ENCODE measurements at regions of chr21 and their contacts with region 1.

Region 1: GRCh38 chr21:42818328-42818749 is 61.0 kb downstream of the WDR4 start:
- DNase-seq: peak; percentile 48 to 84 (median 69)
- ATAC-seq: peak; percentile 93
- H3K4me3 ChIP-seq: no peak overlapping the region
- H3K4me3 Mint-ChIP-seq: no peak overlapping the region
- H3K27ac ChIP-seq: no peak overlapping the region
- H3K27ac Mint-ChIP-seq: no peak overlapping the region
- H3K4me1 ChIP-seq: no peaks in the 10 kb centered on the region
- H3K4me1 Mint-ChIP-seq: peaks cover 5% of the 10 kb centered on the region
- H3K27me3 ChIP-seq: peaks cover 0 to 5% of the 10 kb centered on the region in 2 experiments
- H3K27me3 Mint-ChIP-seq: peaks cover 9% of the 10 kb centered on the region
- CTCF ChIP-seq: peak; percentile 96

Region 2: DNA sequence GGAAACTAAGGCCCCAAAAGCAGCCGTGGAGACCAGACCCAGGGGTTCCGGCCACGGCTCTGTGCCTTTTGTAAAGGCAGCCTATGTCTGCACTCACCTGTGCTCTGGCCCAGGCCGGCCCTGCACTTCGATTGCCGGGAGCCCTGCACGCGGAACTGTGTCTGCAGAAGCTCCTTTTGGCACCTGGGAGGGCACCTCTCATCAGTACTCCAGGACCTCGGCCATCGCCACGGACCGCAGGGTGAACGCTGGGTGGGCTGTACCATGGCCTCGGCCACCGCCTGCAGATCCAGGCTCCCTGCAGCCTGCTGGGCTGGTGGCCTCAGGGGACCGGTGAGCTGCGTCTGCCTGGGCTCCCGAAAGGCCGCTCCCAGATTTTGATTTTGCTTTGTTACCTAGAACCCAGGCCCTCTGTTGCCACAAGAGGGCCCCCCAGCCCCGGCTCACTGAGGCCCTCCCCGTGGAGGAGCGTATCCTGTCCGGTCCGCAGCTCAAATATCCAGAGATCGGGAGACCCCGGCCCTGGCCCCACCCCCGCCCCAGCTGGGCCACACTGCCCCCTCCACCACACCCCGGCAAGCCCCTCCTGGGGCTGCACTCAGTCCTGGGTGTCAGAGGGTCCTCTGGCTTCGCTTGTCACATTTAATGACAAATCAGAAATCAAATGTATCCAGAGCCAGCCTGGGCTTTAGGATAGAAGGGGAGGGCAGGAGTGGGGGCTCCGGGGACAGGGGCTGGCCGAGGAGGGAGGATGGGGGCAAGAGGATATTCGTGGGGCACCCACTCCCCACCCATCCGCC is 225.1 kb before region 1 on chr21:
- CTCF ChIA-PET with region 1: interaction called, 9 read pairs
- POLR2A ChIA-PET with region 1: interaction called, 3 read pairs
- intact Hi-C with region 1: loop called (anchors 1 to 5 kb)
- DNase-seq: peak; percentile 45 to 80 (median 68)
- ATAC-seq: peak; percentile 89
- H3K4me3 ChIP-seq: no peak overlapping the region
- H3K4me3 Mint-ChIP-seq: no peak overlapping the region
- H3K27ac ChIP-seq: no peak overlapping the region
- H3K27ac Mint-ChIP-seq: no peak overlapping the region
- H3K4me1 ChIP-seq: peaks cover 17% of the 10 kb centered on the region
- H3K4me1 Mint-ChIP-seq: peaks cover 24% of the 10 kb centered on the region
- H3K27me3 ChIP-seq: no peaks in the 10 kb centered on the region
- H3K27me3 Mint-ChIP-seq: no peaks in the 10 kb centered on the region
- CTCF ChIP-seq: peak; percentile 86

Region 3: DNA sequence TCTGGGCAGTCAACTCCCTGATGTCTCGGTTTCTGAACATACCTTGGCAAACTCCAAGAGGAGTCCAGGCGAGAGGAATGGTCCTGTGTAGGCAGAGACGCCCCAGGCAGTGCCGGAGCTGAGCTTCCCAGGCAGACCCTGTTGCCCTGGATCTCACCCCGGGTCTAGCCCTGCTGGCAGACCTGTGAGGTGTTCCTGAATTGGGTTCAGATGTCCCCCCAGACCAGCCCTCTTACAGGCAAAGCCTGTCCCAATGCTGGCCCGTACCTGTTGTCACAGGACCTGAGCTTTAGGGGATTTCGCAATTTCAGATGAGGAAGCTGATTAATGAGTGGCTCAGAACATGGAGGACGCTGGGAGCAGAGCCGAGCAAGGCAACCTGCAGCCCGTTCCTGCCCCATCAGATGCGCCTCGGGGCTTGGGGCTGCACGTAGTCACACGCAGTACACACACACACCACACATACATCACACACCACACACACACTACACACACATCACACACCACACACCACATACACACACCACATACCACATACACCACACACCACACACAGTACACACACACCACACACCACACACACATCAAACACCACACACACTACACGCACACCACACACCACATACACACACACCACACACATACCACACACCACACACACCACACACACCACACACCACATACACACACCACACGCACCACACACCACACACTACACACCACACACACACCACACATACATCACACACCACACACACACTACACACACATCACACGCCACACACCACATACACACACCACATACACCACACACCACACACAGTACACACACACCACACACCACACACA is 203.3 kb before region 1 on chr21:
- CTCF ChIA-PET with region 1: no interaction called
- POLR2A ChIA-PET with region 1: no interaction called
- intact Hi-C with region 1: loop called in 1 of 2 experiments (anchors 5 kb)
- DNase-seq: peak; percentile 26 to 87 (median 38)
- ATAC-seq: peak; percentile 66
- H3K4me3 ChIP-seq: peak overlapping the region; percentile 51
- H3K4me3 Mint-ChIP-seq: no peak overlapping the region
- H3K27ac ChIP-seq: peak overlapping the region; percentile 0 to 55
- H3K27ac Mint-ChIP-seq: no peak overlapping the region
- H3K4me1 ChIP-seq: peaks cover 37% of the 10 kb centered on the region
- H3K4me1 Mint-ChIP-seq: peaks cover 5% of the 10 kb centered on the region
- H3K27me3 ChIP-seq: no peaks in the 10 kb centered on the region
- H3K27me3 Mint-ChIP-seq: no peaks in the 10 kb centered on the region
- CTCF ChIP-seq: no peak

Region 4: GRCh38 chr21:42653231-42654061 is 164.9 kb before region 1 on chr21 and contains the start of gene PDE9A:
- CTCF ChIA-PET with region 1: no interaction called
- POLR2A ChIA-PET with region 1: interaction called, 3 read pairs
- intact Hi-C with region 1: loop called in 1 of 2 experiments (anchors 1 kb)
- DNase-seq: peak in 12 of 14 experiments; percentile 11 to 72 (median 44)
- ATAC-seq: peak; percentile 79
- H3K4me3 ChIP-seq: peak within 1 kb of the TSS; percentile 58
- H3K4me3 Mint-ChIP-seq: peak within 1 kb of the TSS; percentile 91
- H3K27ac ChIP-seq: no peak within 1 kb of the TSS
- H3K27ac Mint-ChIP-seq: peak within 1 kb of the TSS; percentile 71
- H3K4me1 ChIP-seq: peaks cover 24% of the 10 kb centered on the region
- H3K4me1 Mint-ChIP-seq: peaks cover 20% of the 10 kb centered on the region
- H3K27me3 ChIP-seq: peaks cover 0 to 8% of the 10 kb centered on the region in 2 experiments
- H3K27me3 Mint-ChIP-seq: no peaks in the 10 kb centered on the region
- CTCF ChIP-seq: no peak
- total RNA-seq, gene PDE9A: 12.6 to 13.2 TPM

Region 5: GRCh38 chr21:42684109-42684916 is 134.0 kb before region 1 on chr21:
- CTCF ChIA-PET with region 1: no interaction called
- POLR2A ChIA-PET with region 1: interaction called, 3 read pairs
- intact Hi-C with region 1: loop called in 1 of 2 experiments (anchors 10 kb)
- DNase-seq: peak; percentile 23 to 73 (median 42)
- ATAC-seq: peak; percentile 68
- H3K4me3 ChIP-seq: peak overlapping the region; percentile 41
- H3K4me3 Mint-ChIP-seq: peak overlapping the region; percentile 91
- H3K27ac ChIP-seq: peak overlapping the region; percentile 29 to 34
- H3K27ac Mint-ChIP-seq: peak overlapping the region; percentile 93
- H3K4me1 ChIP-seq: peaks cover 50% of the 10 kb centered on the region
- H3K4me1 Mint-ChIP-seq: peaks cover 49% of the 10 kb centered on the region
- H3K27me3 ChIP-seq: no peaks in the 10 kb centered on the region
- H3K27me3 Mint-ChIP-seq: no peaks in the 10 kb centered on the region
- CTCF ChIP-seq: no peak

Region 6: DNA sequence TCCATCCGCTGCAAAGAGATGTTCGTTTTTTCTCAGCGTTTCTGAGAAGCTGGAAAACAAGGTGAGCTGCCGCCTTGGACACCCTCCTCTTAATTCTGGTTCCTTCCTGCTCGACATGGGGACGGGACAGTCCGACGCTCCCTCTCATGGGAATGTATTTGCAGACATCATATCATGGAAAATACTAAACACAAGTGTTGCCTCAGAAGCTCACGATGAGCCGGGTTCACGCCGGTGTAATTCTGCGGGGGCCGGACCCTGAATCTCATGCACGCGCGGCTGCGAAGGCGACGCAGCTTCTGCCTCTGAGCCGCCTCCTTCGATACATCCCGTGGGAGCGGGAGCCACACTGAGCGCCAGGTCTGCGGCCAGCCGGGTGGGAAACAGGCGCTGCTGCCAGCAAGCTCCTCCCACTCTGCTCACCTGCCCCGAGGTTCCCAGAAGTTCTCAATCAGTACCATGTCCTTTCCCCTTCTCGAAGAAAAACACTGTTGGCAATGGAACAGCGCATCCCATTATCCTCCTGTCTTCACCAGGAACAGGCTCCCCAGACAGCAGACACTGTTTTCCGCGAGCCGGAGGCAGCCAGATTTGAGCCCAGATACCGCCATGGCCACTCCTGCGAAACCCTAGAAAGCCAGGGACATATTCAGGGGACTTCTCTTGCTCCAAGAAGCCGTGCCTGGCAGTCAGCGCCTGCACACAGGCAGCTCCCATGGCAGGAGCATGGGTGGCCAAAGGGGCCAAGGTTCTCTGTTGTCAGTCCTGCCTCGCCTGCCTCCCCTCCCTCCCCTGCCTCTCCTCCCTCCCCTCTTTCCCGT is 37.0 kb before region 1 on chr21:
- CTCF ChIA-PET with region 1: no interaction called
- POLR2A ChIA-PET with region 1: no interaction called
- intact Hi-C with region 1: loop called in 1 of 2 experiments (anchors 5 kb)
- DNase-seq: peak in 2 of 14 experiments; percentile 15 to 27
- ATAC-seq: no peak
- H3K4me3 ChIP-seq: no peak overlapping the region
- H3K4me3 Mint-ChIP-seq: peak overlapping the region; percentile 57
- H3K27ac ChIP-seq: peak overlapping the region in 1 of 2 donors; percentile 2
- H3K27ac Mint-ChIP-seq: peak overlapping the region; percentile 99
- H3K4me1 ChIP-seq: peaks cover 46% of the 10 kb centered on the region
- H3K4me1 Mint-ChIP-seq: peaks cover 56% of the 10 kb centered on the region
- H3K27me3 ChIP-seq: no peaks in the 10 kb centered on the region
- H3K27me3 Mint-ChIP-seq: no peaks in the 10 kb centered on the region
- CTCF ChIP-seq: no peak